Caco-2 (cell line): ENCODE measurements at regions of chr3 and their contacts with region 1.

Region 1: GRCh38 chr3:31922962-31923361 is 58.1 kb downstream of the OSBPL10 start:
- DNase-seq: peak; percentile 59 to 81
- H3K4me3 ChIP-seq: peak overlapping the region; percentile 13; the same call in 1 of the 2 replicates
- H3K4me3 Mint-ChIP-seq: peak overlapping the region; percentile 70
- H3K27ac Mint-ChIP-seq: peak overlapping the region; percentile 98
- H3K4me1 ChIP-seq: peaks cover 63% of the 10 kb centered on the region
- H3K4me1 Mint-ChIP-seq: peaks cover 50% of the 10 kb centered on the region
- H3K27me3 ChIP-seq: no peaks in the 10 kb centered on the region
- H3K27me3 Mint-ChIP-seq: no peaks in the 10 kb centered on the region
- CTCF ChIP-seq: no peak

Region 2: GRCh38 chr3:31946484-31947081 is 23.6 kb after region 1 on chr3:
- CTCF ChIA-PET with region 1: no interaction called
- POLR2A ChIA-PET with region 1: no interaction called
- intact Hi-C with region 1: loop called (anchors 2 kb)
- DNase-seq: no peak
- H3K4me3 ChIP-seq: no peak overlapping the region
- H3K4me3 Mint-ChIP-seq: no peak overlapping the region
- H3K27ac Mint-ChIP-seq: peak overlapping the region; percentile 3
- H3K4me1 ChIP-seq: peaks cover 21% of the 10 kb centered on the region
- H3K4me1 Mint-ChIP-seq: peaks cover 28% of the 10 kb centered on the region
- H3K27me3 ChIP-seq: no peaks in the 10 kb centered on the region
- H3K27me3 Mint-ChIP-seq: no peaks in the 10 kb centered on the region
- CTCF ChIP-seq: no peak

Region 3: DNA sequence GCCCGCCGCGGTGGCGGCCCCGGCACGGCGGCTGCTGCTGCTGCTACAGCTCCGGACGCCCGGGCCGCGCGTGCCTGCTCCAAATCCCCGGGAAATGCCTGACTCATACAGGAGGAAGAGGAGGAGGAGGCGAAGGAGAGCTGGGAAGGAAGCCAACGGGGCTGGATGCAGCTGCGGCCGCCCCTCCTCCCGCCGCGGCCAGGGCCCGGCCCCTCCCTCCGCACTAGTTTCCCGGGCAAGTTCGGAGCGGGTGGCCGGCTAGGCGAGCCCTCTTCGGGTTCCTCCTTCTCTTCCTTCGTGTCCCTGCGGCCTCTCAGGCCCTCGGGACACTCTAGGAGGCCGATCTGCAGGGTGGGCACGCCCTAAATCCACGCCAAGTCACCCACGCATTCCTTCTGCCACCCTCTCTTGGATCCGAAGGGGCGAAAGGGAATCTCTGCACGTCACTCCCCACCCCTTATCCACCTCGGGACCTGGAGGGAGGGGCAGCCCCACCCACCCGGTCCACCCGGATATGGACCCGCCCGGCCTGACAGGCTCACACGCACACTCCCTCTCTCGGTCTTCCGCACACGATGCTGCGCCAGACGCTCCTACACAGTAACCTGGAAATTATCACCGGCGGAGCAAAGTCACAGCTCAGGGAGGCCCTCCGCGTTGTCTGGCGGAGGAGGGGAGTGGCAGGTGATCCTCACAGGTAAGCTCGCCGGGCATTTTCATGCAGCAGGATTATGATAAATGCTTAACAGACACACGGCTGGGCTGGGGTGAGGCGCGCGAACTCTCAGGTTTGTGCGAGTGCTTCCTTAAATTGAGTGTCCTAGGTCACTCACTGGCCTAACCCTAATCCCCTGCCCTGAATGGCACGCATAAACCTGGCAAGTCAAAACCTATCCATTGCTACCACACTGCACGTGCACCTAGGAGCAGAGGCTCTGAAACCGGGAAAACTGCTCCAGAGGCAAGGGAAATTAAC is 58.5 kb after region 1 on chr3 and contains the starts of genes OSBPL10 and ZNF860:
- CTCF ChIA-PET with region 1: no interaction called
- POLR2A ChIA-PET with region 1: no interaction called
- intact Hi-C with region 1: loop called (anchors 1 kb)
- DNase-seq: peak; percentile 84 to 89
- H3K4me3 ChIP-seq: peak within 1 kb of the TSS; percentile 62
- H3K4me3 Mint-ChIP-seq: peak within 1 kb of the TSS; percentile 93
- H3K27ac Mint-ChIP-seq: peak within 1 kb of the TSS; percentile 88
- H3K4me1 ChIP-seq: peaks cover 28% of the 10 kb centered on the region
- H3K4me1 Mint-ChIP-seq: peaks cover 23% of the 10 kb centered on the region
- H3K27me3 ChIP-seq: no peaks in the 10 kb centered on the region
- H3K27me3 Mint-ChIP-seq: no peaks in the 10 kb centered on the region
- CTCF ChIP-seq: no peak
- total RNA-seq, gene OSBPL10: 71.2 and 79.5 TPM in 2 replicates
- total RNA-seq, gene ZNF860: 4.7 and 5.9 TPM in 2 replicates